HEK293 (cell line): ENCODE measurements at regions of chr15 and their contacts with region 1.

Region 1: DNA sequence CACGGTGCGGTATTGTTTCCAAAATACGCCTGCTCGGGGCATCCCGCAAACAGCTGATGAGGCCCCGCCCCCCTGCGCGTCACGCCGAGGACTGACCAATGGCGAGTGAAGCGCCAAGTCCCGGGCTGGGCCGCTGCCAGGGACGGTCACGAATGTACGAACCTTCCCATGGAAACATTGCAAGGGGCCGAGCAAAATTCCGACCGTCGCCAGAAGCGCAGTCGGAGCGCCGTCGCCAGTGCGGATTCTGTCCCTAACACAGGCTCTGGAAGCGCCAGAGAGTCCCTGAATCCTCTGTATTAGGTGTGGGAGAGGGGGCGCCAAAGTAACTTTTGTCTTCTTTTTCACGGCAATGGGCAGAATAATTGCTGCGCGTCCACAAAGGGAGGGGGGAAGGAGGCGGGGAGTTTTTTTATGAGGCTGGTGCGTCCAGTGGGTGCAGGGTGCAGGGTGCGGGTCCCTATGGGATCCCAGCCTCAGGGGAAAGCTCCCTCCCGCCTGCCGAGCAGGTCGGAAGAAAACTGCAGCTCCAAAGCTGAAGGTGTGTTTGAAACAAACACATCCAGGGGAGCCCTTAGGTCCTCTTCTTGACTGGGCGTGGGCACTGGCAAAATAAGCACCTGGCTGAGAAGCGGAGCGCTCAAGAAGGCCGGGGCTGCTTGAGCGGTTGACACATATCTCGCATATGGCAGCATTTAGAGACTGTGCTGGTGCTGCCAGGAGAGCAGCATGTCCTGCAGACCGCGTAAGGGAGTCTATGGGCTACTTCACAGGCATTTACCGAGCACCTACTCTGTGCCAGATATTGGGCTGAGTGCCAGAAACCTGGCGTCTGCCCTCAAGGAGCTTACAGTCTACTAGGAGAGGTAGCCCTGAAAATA is at the start of gene BMF:
- H3K4me3 ChIP-seq: peak within 1 kb of the TSS; percentile 57
- H3K27ac ChIP-seq: peak within 1 kb of the TSS; percentile 85
- H3K4me1 ChIP-seq: peaks cover 24% of the 10 kb centered on the region
- CTCF ChIP-seq: peak; percentile 89

Region 2: DNA sequence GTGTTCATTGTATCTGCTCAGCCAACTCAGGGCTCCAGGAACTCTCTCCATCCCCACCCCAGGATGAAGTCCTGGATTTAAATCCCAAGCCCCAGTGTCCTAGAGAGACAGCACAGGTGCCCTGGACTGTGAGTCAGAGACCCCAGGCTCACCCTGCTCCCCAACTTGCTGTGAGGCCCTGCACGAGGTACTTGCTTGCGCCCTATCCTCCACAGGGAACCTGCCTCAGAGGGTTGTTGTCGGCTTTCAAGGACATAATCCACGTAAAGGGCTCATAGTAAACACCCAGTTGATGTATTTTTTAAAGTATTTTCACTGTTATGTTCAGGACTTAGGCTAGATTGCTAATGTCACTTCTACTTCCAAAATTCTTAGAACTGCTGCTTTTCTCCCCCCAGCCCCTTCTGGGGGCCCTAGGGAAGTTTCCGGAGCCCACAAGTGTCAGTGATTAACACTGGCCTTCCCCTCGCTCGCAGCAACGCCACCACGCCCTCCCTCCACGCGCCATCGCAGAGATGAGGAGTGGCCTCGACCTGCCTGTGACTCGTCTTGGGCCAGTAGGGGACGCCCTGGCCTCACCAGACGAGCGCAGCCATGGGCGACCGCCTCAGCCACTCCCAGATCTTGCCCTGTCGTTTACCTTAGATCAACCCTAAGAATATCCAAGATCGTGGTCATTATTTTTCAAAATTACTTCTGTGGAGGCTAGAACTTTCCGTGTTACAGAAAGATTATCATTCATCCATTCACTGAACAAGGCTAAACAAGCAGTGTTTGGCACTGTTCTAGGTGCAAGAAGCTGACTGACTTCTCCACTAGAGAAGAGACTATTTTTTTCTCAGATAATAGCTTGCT is 64.2 kb before region 1 on chr15:
- CTCF ChIA-PET with region 1: interaction called, 56 read pairs
- POLR2A ChIA-PET with region 1: interaction called, 10 read pairs
- H3K4me3 ChIP-seq: no peak overlapping the region
- H3K27ac ChIP-seq: peak overlapping the region; percentile 28; the same call in 1 of the 2 replicates
- H3K4me1 ChIP-seq: peaks cover 14% of the 10 kb centered on the region
- CTCF ChIP-seq: peak; percentile 94

Region 3: GRCh38 chr15:40054605-40055545 is 54.2 kb before region 1 on chr15:
- CTCF ChIA-PET with region 1: interaction called, 22 read pairs
- POLR2A ChIA-PET with region 1: interaction called, 5 read pairs
- H3K4me3 ChIP-seq: no peak overlapping the region
- H3K27ac ChIP-seq: peak overlapping the region; percentile 28; the same call in 1 of the 2 replicates
- H3K4me1 ChIP-seq: peaks cover 7% of the 10 kb centered on the region; the same call in 1 of the 2 replicates
- CTCF ChIP-seq: no peak

Region 4: DNA sequence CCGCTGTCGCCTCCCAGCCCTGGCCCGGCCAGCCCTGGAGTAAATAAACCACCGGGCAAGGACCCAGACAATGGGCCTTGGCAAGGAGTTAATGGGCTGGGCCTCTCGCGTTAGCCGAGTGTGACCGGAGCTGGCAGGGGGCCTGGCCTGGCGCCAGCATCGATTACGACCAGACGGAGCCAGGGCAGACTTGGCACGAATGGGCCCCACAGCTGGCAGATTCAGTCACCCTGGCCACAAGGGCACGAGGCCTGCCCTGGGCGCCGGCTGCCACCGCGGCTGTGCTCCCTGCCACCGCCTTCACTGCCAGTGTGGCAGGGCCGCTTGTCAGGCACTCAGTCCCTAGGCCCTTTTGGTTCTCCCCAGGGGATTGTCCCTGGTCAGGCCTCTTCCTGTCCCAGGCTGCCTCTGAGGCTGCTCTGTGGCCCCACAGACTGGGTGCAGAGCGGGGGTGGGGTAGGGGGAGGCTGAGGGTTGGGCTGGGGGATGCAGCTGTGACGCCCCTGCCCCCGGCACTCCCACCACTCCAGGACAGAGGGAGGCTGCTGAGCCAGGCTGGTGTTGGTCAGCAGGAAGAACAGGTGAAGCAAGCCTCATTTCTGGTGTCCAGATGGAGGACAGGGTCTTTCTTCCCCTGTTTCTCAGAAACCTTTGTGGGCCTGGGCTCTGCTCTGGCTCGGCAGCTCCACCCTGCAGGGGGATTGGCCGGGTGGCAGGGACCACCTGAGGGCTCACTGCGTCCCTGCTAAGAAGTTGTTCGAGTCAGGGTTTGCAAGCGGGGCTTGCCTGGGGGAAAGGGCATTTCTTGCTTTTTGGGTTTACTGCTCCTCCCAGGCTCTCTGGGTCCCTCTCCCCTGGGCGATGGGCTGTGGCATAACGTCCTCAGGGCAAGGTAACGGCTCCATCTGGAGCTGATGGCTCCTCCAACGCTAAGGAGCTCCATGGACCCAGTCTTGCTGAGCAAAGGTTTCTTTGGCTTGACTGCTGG is 39.6 kb before region 1 on chr15:
- CTCF ChIA-PET with region 1: interaction called, 11 read pairs
- POLR2A ChIA-PET with region 1: no interaction called
- H3K4me3 ChIP-seq: no peak overlapping the region
- H3K27ac ChIP-seq: peak overlapping the region; percentile 93
- H3K4me1 ChIP-seq: peaks cover 24% of the 10 kb centered on the region
- CTCF ChIP-seq: no peak

Region 5: GRCh38 chr15:40092256-40092978 is 16.7 kb before region 1 on chr15:
- CTCF ChIA-PET with region 1: interaction called, 44 read pairs
- POLR2A ChIA-PET with region 1: interaction called, 52 read pairs
- H3K4me3 ChIP-seq: no peak overlapping the region
- H3K27ac ChIP-seq: peak overlapping the region; percentile 98
- H3K4me1 ChIP-seq: peaks cover 53% of the 10 kb centered on the region
- CTCF ChIP-seq: peak; percentile 13; the same call in 1 of the 2 replicates

Region 6: GRCh38 chr15:40098489-40099261 is 10.4 kb before region 1 on chr15:
- CTCF ChIA-PET with region 1: interaction called, 44 read pairs
- POLR2A ChIA-PET with region 1: interaction called, 52 read pairs
- H3K4me3 ChIP-seq: no peak overlapping the region
- H3K27ac ChIP-seq: peak overlapping the region; percentile 98
- H3K4me1 ChIP-seq: peaks cover 68% of the 10 kb centered on the region
- CTCF ChIP-seq: no peak

Region 7: DNA sequence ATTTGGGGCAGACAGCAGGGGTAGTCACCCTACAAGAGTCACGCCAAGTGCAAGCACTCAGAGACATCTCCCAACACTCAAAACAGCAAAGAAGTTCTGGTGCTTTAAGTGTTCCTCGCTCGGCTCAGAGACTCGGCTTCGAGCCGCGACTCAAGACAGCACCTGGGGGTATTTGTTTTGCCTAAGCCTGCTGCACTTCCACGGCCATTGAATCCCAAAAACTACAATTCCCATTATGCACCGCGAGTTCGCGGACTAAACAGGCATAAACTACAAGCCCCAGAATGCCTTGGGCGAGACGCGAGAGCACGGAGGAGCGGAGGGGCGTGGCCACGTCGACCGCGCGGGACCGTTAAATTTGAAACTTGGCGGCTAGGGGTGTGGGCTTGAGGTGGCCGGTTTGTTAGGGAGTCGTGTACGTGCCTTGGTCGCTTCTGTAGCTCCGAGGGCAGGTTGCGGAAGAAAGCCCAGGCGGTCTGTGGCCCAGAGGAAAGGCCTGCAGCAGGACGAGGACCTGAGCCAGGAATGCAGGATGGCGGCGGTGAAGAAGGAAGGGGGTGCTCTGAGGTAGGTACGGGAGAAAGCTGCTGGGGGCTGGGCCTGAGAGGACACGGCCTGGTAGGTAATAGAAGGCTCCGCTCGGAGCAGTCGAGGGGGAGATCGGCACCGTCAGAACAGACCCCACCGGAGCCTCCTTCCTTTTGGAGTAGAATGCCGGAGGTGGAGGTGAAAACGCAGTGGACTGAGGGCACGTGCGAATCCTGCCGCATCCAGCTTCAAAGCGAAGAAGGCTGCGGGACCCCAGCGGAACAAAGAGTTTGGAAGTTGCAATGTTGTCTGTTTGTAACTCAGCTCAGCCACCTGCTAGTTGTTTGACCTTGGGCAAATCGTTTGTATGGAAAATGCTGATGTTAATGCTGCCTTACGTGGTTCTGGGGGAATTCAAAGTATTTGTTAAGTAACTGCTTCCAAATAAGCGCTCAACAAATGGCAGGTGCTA is 51.9 kb after region 1 on chr15 and contains the start of gene BUB1B:
- CTCF ChIA-PET with region 1: interaction called, 18 read pairs
- POLR2A ChIA-PET with region 1: interaction called, 10 read pairs
- H3K4me3 ChIP-seq: peak within 1 kb of the TSS; percentile 95
- H3K27ac ChIP-seq: peak within 1 kb of the TSS; percentile 73
- H3K4me1 ChIP-seq: no peaks in the 10 kb centered on the region; the same call in 1 of the 2 replicates
- CTCF ChIP-seq: no peak